ENCODE measurements at regions of chr3 and their contacts with region 1.

Region 1: GRCh38 chr3:149812606-149813366 is at the start of gene RNF13:
- DNase-seq: peak; percentile 88 to 95 (median 90)
- H3K4me3 ChIP-seq: peak within 1 kb of the TSS; percentile 96
- H3K4me3 Mint-ChIP-seq: peak within 1 kb of the TSS; percentile 97 to 100 (median 99)
- H3K27ac ChIP-seq: peak within 1 kb of the TSS; percentile 88
- H3K27ac Mint-ChIP-seq: peak within 1 kb of the TSS; percentile 97 to 100 (median 99)
- H3K4me1 ChIP-seq: peaks cover 37% of the 10 kb centered on the region
- H3K4me1 Mint-ChIP-seq: peaks cover 52 to 54% (median 53%) of the 10 kb centered on the region in 3 donors
- H3K27me3 ChIP-seq: no peaks in the 10 kb centered on the region
- H3K27me3 Mint-ChIP-seq: peaks cover 4 to 7% of the 10 kb centered on the region in 2 donors
- total RNA-seq, gene RNF13: 33.5 to 33.6 TPM

Region 2: GRCh38 chr3:149571381-149571780 is 241.4 kb before region 1 on chr3:
- CTCF ChIA-PET with region 1: interaction called, 15 read pairs
- POLR2A ChIA-PET with region 1: no interaction called
- DNase-seq: no peak
- H3K4me3 ChIP-seq: no peak overlapping the region
- H3K4me3 Mint-ChIP-seq: no peak overlapping the region
- H3K27ac ChIP-seq: no peak overlapping the region
- H3K27ac Mint-ChIP-seq: no peak overlapping the region
- H3K4me1 ChIP-seq: no peaks in the 10 kb centered on the region
- H3K4me1 Mint-ChIP-seq: peaks cover 3 to 27% (median 14%) of the 10 kb centered on the region in 3 donors
- H3K27me3 ChIP-seq: no peaks in the 10 kb centered on the region
- H3K27me3 Mint-ChIP-seq: peaks cover 0 to 3% of the 10 kb centered on the region in 2 donors

Region 3: DNA sequence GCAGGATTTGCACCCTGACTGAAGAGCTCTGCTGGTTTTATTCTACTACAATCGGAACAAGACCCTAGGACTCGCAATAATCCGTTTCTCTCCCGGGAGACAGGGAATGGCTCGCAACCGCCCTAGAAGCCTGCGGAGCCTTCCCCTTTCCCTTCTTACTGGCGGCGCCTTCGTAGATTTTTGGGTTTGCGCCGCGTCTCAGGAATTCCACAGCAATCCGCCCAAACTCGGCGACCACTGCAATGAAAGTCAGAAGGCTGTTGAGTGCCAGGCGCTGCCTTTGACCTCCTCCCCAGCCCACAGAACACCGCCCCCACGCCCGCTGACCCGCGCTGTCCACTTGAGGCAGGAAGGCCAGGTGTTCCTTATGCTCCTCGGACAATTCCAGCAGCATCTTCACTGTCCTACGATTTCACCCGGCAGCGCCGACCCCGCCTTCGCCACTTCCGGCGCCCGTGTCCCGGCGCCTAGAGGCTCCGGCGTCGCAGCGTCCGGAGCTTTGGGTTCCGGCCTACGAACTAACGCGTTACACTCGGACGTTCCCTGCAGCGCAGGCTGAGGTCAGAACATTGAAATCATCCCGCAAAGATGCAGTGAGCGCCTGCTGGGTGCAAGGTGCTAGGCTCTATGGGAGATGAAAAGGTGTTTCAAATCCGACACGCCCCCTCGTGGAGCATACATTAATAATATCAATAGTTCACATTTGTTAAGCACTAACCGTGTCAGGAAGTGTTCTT is 60.6 kb before region 1 on chr3 and contains the start of gene COMMD2:
- CTCF ChIA-PET with region 1: interaction called, 13 read pairs
- POLR2A ChIA-PET with region 1: interaction called, 14 read pairs
- DNase-seq: peak; percentile 56 to 75 (median 65)
- H3K4me3 ChIP-seq: peak within 1 kb of the TSS; percentile 75
- H3K4me3 Mint-ChIP-seq: peak within 1 kb of the TSS; percentile 92 to 100 (median 95)
- H3K27ac ChIP-seq: peak within 1 kb of the TSS; percentile 71
- H3K27ac Mint-ChIP-seq: peak within 1 kb of the TSS; percentile 93 to 99 (median 95)
- H3K4me1 ChIP-seq: peaks cover 21% of the 10 kb centered on the region
- H3K4me1 Mint-ChIP-seq: peaks cover 33 to 57% (median 46%) of the 10 kb centered on the region in 3 donors
- H3K27me3 ChIP-seq: no peaks in the 10 kb centered on the region
- H3K27me3 Mint-ChIP-seq: no peaks in the 10 kb centered on the region
- total RNA-seq, gene COMMD2: 42.4 to 48.4 TPM

Region 4: GRCh38 chr3:149771652-149772271 is 41.0 kb before region 1 on chr3:
- CTCF ChIA-PET with region 1: interaction called, 17 read pairs
- POLR2A ChIA-PET with region 1: no interaction called
- DNase-seq: peak; percentile 10 to 46 (median 14)
- H3K4me3 ChIP-seq: no peak overlapping the region
- H3K4me3 Mint-ChIP-seq: no peak overlapping the region
- H3K27ac ChIP-seq: no peak overlapping the region
- H3K27ac Mint-ChIP-seq: no peak overlapping the region
- H3K4me1 ChIP-seq: no peaks in the 10 kb centered on the region
- H3K4me1 Mint-ChIP-seq: no peaks in the 10 kb centered on the region
- H3K27me3 ChIP-seq: no peaks in the 10 kb centered on the region
- H3K27me3 Mint-ChIP-seq: peaks cover 2 to 18% of the 10 kb centered on the region in 2 donors

Region 5: DNA sequence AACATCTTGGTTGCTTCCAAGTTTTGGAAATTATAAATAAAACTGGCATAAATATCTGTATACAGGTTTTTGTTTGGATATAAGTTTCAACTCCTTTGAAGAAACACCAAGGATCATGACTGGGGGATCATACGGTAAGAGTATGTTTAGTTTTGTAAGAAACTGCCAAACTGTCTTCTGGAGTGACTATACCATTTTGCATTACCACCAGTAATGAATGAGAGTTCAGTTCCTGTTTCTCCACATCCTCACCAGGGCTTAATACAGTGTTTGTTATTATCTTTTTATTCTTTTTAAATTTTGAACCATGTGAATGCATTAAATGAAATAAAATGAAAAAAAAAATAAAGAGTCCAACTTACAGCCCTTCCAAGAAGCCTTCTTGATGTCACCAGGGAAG is 16.8 kb before region 1 on chr3:
- CTCF ChIA-PET with region 1: interaction called, 11 read pairs
- POLR2A ChIA-PET with region 1: no interaction called
- DNase-seq: no peak
- H3K4me3 ChIP-seq: no peak overlapping the region
- H3K4me3 Mint-ChIP-seq: no peak overlapping the region
- H3K27ac ChIP-seq: no peak overlapping the region
- H3K27ac Mint-ChIP-seq: no peak overlapping the region
- H3K4me1 ChIP-seq: no peaks in the 10 kb centered on the region
- H3K4me1 Mint-ChIP-seq: no peaks in the 10 kb centered on the region
- H3K27me3 ChIP-seq: no peaks in the 10 kb centered on the region
- H3K27me3 Mint-ChIP-seq: peaks cover 14 to 39% of the 10 kb centered on the region in 2 donors

Region 6: DNA sequence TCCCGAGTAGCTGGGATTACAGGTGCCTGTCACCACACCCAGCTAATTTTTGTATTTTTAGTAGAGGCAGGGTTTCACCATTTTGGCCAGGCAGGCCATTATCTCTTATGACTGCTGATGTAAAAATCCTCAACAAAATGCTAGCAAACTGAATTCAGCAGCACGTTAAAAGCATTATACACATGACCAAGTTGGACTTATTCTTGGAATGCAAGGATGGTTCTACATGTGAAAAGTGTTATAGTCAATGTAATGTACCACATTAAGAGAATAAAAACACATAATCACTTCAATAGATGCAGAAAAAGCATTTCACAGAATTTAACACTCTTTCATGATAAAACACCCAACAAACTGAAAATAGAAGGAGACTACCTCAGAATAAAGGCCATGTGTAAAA is 20.5 kb after region 1 on chr3:
- CTCF ChIA-PET with region 1: no interaction called
- POLR2A ChIA-PET with region 1: no interaction called
- DNase-seq: no peak
- H3K4me3 ChIP-seq: no peak overlapping the region
- H3K4me3 Mint-ChIP-seq: no peak overlapping the region
- H3K27ac ChIP-seq: no peak overlapping the region
- H3K27ac Mint-ChIP-seq: no peak overlapping the region
- H3K4me1 ChIP-seq: no peaks in the 10 kb centered on the region
- H3K4me1 Mint-ChIP-seq: peaks cover 3 to 40% (median 37%) of the 10 kb centered on the region in 3 donors
- H3K27me3 ChIP-seq: no peaks in the 10 kb centered on the region
- H3K27me3 Mint-ChIP-seq: no peaks in the 10 kb centered on the region

Region 7: DNA sequence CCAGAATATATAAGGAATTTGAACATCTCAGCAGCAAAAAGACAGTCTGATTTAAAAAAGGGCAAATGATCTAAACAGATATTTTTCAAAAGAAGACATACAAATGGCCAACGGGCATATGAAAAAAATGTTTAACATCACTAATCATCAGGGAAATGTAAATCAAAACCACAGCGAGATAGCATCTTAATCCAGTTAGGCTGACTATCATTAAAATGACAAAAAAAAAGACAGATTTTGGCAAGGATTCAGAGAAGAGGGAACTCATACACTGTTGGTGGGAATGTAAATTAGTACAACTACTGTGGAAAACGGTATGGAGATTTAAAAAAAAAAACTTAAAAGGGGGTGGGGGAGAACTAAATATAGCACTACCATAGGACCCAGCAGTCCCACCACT is 48.1 kb after region 1 on chr3:
- CTCF ChIA-PET with region 1: no interaction called
- POLR2A ChIA-PET with region 1: no interaction called
- DNase-seq: no peak
- H3K4me3 ChIP-seq: no peak overlapping the region
- H3K4me3 Mint-ChIP-seq: no peak overlapping the region
- H3K27ac ChIP-seq: no peak overlapping the region
- H3K27ac Mint-ChIP-seq: peak overlapping the region in 2 of 8 donors; percentile 13 to 91
- H3K4me1 ChIP-seq: no peaks in the 10 kb centered on the region
- H3K4me1 Mint-ChIP-seq: peaks cover 7 to 30% (median 27%) of the 10 kb centered on the region in 3 donors
- H3K27me3 ChIP-seq: no peaks in the 10 kb centered on the region
- H3K27me3 Mint-ChIP-seq: no peaks in the 10 kb centered on the region